H1 (cell line): ENCODE measurements at regions of chr3 and their contacts with region 1.

Region 1: DNA sequence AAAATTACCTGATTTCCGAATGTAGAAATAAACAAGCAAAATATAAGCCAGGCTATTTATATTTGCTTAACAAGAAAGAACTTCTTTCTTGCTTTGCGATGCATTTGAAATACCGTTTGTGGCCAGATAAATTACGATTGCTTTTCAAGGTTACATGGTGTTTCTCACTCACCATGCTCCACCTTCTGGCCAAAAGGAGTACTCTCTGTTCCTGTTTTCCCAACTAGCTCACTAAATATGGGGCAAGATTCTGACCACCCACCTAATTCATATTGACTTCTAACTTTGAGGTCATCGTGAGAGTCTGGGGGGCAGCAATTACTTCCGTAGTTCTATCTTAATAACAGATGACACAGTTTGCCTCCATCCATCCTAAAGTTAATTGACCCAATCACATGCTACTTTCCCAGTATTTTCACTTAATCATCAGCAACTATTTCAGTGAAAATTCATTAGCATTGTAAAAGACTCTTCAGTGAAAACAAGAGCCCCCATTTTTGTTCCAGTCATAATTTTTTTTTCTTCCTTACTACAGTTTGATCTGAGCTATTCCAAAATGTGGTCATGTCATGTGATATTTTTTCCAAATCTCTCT is 25.9 kb downstream of the ACP3 start:
- DNase-seq: peak in 1 of 2 experiments; percentile 53
- H3K4me3 ChIP-seq: no peak overlapping the region
- H3K27ac ChIP-seq: no peak overlapping the region
- H3K4me1 ChIP-seq: peaks cover 0 to 2% (median 0%) of the 10 kb centered on the region in 4 experiments; a peak in 1 of 7 replicates
- H3K27me3 ChIP-seq: no peaks in the 10 kb centered on the region
- CTCF ChIP-seq: peak in 2 of 3 experiments; percentile 82 to 86; a peak in 3 of 4 replicates
- EP300 ChIP-seq: no peak
- POLR2A ChIP-seq: no peak
- RAD21 ChIP-seq: peak; percentile 84 to 87

Region 2: DNA sequence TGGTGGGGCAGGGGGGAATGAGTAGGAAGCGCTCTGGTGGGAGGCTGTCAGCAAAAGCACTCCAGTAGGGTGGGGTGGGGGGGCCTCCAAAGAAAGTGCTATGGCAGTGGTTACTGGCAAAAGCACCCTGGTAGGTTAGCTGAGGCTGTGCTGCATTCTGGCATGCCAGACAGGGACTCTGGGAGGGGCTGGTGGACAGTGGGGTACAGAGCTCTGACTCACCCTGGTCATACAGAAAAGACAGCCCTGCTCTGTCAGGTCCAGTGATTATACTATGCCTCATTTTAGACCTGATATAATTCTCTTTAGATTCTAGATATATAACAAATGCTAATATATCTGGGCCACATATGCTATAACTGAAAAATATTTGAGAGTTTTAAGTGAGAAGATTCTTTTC is 225.5 kb before region 1 on chr3:
- CTCF ChIA-PET with region 1: no interaction called
- POLR2A ChIA-PET with region 1: no interaction called
- DNase-seq: no peak
- H3K4me3 ChIP-seq: no peak overlapping the region
- H3K27ac ChIP-seq: no peak overlapping the region
- H3K4me1 ChIP-seq: no peaks in the 10 kb centered on the region
- H3K27me3 ChIP-seq: no peaks in the 10 kb centered on the region
- CTCF ChIP-seq: no peak
- EP300 ChIP-seq: no peak
- POLR2A ChIP-seq: no peak
- RAD21 ChIP-seq: no peak

Region 3: GRCh38 chr3:132210476-132211346 is 132.4 kb before region 1 on chr3:
- CTCF ChIA-PET with region 1: interaction called, 12 read pairs
- POLR2A ChIA-PET with region 1: no interaction called
- DNase-seq: peak; percentile 49 to 84
- H3K4me3 ChIP-seq: no peak overlapping the region
- H3K27ac ChIP-seq: no peak overlapping the region
- H3K4me1 ChIP-seq: peaks cover 0 to 4% (median under 1%) of the 10 kb centered on the region in 4 experiments; a peak in 2 of 7 replicates
- H3K27me3 ChIP-seq: peaks cover 27 to 42% (median 40%) of the 10 kb centered on the region in 4 experiments
- CTCF ChIP-seq: peak; percentile 88 to 93 (median 90)
- EP300 ChIP-seq: no peak
- POLR2A ChIP-seq: no peak
- RAD21 ChIP-seq: peak; percentile 91 to 95

Region 4: GRCh38 chr3:132268956-132269355 is 74.2 kb before region 1 on chr3:
- CTCF ChIA-PET with region 1: interaction called, 44 read pairs
- POLR2A ChIA-PET with region 1: interaction called, 3 read pairs
- DNase-seq: peak in 1 of 2 experiments; percentile 54
- H3K4me3 ChIP-seq: no peak overlapping the region
- H3K27ac ChIP-seq: no peak overlapping the region
- H3K4me1 ChIP-seq: peaks cover 0 to 3% (median 0%) of the 10 kb centered on the region in 4 experiments; a peak in 1 of 7 replicates
- H3K27me3 ChIP-seq: no peaks in the 10 kb centered on the region
- CTCF ChIP-seq: peak; percentile 34 to 68 (median 60)
- EP300 ChIP-seq: no peak
- POLR2A ChIP-seq: no peak
- RAD21 ChIP-seq: peak; percentile 29 to 59

Region 5: DNA sequence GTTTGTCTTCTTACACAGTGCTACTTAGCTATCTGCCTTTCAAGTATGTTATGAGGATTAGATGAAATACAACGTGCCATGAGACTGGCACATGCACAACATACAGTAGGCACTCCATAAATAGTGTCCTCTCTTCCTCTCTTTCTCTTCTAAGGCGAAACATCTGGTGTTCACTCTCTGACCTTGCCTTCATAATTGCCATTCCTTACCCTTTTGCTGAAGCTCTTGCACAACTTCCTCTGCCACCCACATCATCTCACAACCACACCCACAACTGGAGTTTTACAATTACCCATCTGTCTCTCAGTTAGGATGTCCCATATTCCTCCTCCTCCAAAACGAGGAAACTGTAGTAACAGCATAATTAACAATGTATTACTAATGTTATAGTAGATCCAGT is 52.3 kb before region 1 on chr3:
- CTCF ChIA-PET with region 1: interaction called, 44 read pairs
- POLR2A ChIA-PET with region 1: no interaction called
- DNase-seq: no peak
- H3K4me3 ChIP-seq: no peak overlapping the region
- H3K27ac ChIP-seq: no peak overlapping the region
- H3K4me1 ChIP-seq: peaks cover 0 to 8% (median 0%) of the 10 kb centered on the region in 4 experiments; a peak in 2 of 7 replicates
- H3K27me3 ChIP-seq: no peaks in the 10 kb centered on the region
- CTCF ChIP-seq: no peak
- EP300 ChIP-seq: no peak
- POLR2A ChIP-seq: no peak
- RAD21 ChIP-seq: no peak

Region 6: DNA sequence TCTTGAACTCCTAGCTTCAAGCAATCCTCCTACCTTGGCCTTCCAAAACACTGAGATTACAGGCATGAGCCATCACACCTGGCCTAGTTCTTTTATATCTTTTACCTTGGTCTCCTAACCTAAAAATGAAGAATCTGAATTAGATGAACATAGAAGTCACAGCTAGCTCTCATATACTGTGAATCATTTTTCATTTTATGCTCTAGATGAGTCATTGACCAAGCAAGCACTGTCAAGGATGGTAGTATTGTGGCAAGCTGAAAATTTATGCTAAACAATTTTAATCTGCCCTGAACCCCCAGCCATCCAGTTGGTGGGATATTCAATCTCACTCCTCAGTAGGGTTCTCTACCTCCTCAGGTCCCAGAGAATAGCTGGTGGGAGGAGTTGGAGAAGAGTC is 25.8 kb after region 1 on chr3:
- CTCF ChIA-PET with region 1: interaction called, 21 read pairs
- POLR2A ChIA-PET with region 1: no interaction called
- DNase-seq: no peak
- H3K4me3 ChIP-seq: no peak overlapping the region
- H3K27ac ChIP-seq: no peak overlapping the region
- H3K4me1 ChIP-seq: no peaks in the 10 kb centered on the region
- H3K27me3 ChIP-seq: no peaks in the 10 kb centered on the region
- CTCF ChIP-seq: no peak
- EP300 ChIP-seq: no peak
- POLR2A ChIP-seq: no peak
- RAD21 ChIP-seq: no peak

Region 7: DNA sequence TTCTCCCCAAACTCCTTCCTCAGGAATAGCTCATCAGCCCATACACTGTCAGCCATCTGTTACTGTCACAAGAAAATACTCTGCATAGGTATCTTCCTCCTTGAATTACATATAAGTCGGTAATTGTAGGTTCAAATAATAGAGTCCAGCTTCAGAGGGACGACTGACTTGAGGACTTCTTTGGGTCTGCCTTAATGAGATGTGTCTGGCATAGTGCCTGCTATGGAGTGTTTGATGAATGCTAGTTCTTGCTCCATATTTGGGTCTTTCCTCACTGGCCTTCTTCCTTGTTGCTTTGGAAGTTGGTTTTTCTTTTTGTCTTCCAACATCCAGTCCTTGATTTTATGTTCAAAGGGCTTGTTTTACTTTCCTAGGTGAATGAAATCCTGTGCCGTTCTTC is 187.5 kb after region 1 on chr3:
- CTCF ChIA-PET with region 1: no interaction called
- POLR2A ChIA-PET with region 1: no interaction called
- DNase-seq: no peak
- H3K4me3 ChIP-seq: no peak overlapping the region
- H3K27ac ChIP-seq: no peak overlapping the region
- H3K4me1 ChIP-seq: no peaks in the 10 kb centered on the region
- H3K27me3 ChIP-seq: no peaks in the 10 kb centered on the region
- CTCF ChIP-seq: no peak
- EP300 ChIP-seq: no peak
- POLR2A ChIP-seq: no peak
- RAD21 ChIP-seq: no peak